Right lobe of liver (tissue), 6 donors: ENCODE measurements at regions of chr1 and their contacts with region 1.

Region 1: DNA sequence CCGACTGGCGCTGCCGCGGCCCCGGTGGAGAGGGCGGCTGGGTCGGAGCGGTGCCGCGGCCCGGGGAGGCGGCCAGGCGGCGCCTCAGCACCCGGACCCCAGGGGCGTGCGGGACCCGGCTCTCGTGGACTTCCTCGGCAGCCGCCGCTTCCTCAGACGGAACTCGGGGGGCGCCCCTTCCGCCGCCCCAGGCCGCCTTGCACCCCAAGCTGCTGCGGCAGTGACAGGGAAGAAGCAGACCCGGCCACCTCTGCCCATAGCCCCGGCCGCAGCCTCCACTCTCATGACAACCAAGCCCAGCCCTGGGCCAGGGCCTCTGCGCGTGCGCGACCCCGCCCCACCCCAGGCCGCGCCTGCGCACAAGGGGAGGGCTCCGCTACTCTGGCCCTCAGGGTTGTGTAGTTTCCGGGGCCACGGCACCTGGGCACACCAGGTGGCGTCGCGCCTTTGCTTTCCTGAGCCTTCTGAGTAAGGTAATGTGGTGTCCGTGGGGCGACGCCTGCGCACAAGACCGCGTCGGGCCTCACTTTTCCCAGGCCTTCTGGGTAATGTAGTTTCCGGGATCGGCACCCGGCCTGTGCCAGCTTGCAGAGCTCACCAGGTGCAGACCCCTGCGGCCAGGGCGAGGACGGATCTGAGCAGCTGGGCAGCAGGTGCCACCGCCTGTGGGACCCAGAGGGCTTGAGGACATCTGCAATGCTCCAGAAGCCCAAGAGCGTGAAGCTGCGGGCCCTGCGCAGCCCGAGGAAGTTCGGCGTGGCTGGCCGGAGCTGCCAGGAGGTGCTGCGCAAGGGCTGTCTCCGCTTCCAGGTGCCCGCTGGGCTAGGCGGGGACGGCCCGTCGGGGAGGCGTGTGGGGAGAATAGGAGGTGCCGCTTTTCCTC is at the starts of genes CEP104 and DFFB:
- DNase-seq: peak; percentile 95 to 98 (median 98)
- ATAC-seq: peak; percentile 94 to 98 (median 96)
- H3K4me3 ChIP-seq: peak within 1 kb of the TSS; percentile 60 to 82 (median 75)
- H3K27ac ChIP-seq: peak within 1 kb of the TSS; percentile 54 to 61 (median 56)
- H3K4me1 ChIP-seq: peaks cover 0 to 19% (median 9%) of the 10 kb centered on the region in 4 donors
- H3K27me3 ChIP-seq: no peaks in the 10 kb centered on the region
- CTCF ChIP-seq: peak; percentile 28 to 60 (median 53)
- POLR2A ChIP-seq: peak; percentile 73
- total RNA-seq, gene CEP104: 16.7 to 36.4 (median 26.6) TPM
- total RNA-seq, gene DFFB: 2.0 to 3.5 (median 2.9) TPM

Region 2: DNA sequence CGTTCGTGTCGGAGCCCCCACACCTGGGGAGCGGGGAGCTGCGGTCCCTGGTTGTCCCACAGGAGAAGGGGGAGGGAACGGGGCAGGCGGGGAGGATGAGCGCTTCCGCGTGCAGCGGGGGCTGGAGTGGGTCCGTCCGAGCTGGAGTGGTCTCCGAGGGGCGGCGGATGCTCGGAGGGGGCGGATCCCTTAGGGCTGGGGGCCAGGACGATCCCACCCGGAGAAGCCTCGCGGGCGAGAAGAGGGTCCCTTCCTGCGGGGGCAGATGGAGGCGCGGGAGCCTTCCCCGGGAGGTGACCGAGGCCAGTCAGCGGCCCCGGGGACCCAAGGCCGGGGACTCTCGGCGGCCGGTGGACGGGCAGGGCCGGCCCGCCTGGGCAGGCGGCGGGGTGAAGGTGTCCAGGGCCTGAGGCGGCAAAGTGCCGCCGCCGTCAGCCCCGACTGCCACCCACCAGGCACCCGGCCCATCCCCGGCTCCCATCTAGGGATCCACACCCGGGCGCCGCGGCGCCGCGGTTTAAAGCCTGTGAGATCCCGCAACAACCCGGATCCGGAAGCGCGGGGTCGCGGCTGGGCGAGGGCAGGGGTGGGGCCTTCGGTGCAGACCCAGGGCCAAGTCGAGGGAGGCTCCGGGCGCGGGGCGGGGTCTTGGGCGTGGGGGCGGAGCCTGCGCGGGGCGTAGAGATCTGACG is 110.2 kb before region 1 on chr1:
- intact Hi-C with region 1: no loop called
- DNase-seq: peak; percentile 92 to 94 (median 93)
- ATAC-seq: peak; percentile 99
- H3K4me3 ChIP-seq: peak overlapping the region; percentile 82 to 94 (median 90)
- H3K27ac ChIP-seq: no peak overlapping the region
- H3K4me1 ChIP-seq: peaks cover 0 to 17% (median 0%) of the 10 kb centered on the region in 4 donors
- H3K27me3 ChIP-seq: no peaks in the 10 kb centered on the region
- CTCF ChIP-seq: no peak
- POLR2A ChIP-seq: no peak

Region 3: DNA sequence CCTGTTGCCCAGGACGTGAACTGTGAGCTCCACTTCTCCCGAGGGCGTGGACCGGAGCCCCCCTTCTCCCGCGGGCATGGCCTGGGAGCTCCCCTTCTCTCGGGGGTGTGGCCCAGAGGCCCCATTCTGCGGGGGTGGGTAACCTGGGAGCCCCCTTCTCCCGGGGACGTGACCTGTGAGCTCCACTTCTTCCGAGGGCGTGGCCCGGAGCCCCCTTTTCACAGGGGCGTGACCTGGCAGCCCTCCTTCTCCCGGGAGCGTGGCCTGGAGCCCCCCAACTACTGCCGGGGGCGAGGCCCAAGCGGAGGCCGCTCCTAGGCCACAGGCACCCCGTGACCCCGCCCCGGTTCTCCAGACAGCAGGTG is 42.6 kb after region 1 on chr1:
- intact Hi-C with region 1: loop called in 1 of 2 experiments (anchors 5 kb)
- DNase-seq: peak in 2 of 3 donors; percentile 45 to 58
- ATAC-seq: no peak
- H3K4me3 ChIP-seq: peak overlapping the region; percentile 88 to 99 (median 97)
- H3K27ac ChIP-seq: peak overlapping the region; percentile 94 to 99 (median 95)
- H3K4me1 ChIP-seq: peaks cover 0 to 32% (median 17%) of the 10 kb centered on the region in 4 donors
- H3K27me3 ChIP-seq: no peaks in the 10 kb centered on the region
- CTCF ChIP-seq: no peak
- POLR2A ChIP-seq: no peak

Region 4: GRCh38 chr1:4018466-4019146 is 161.5 kb after region 1 on chr1:
- intact Hi-C with region 1: no loop called
- DNase-seq: no peak
- ATAC-seq: no peak
- H3K4me3 ChIP-seq: no peak overlapping the region
- H3K27ac ChIP-seq: no peak overlapping the region
- H3K4me1 ChIP-seq: no peaks in the 10 kb centered on the region
- H3K27me3 ChIP-seq: no peaks in the 10 kb centered on the region
- CTCF ChIP-seq: no peak
- POLR2A ChIP-seq: no peak